ENCODE measurements at regions of chr9 and their contacts with region 1.

Region 1: DNA sequence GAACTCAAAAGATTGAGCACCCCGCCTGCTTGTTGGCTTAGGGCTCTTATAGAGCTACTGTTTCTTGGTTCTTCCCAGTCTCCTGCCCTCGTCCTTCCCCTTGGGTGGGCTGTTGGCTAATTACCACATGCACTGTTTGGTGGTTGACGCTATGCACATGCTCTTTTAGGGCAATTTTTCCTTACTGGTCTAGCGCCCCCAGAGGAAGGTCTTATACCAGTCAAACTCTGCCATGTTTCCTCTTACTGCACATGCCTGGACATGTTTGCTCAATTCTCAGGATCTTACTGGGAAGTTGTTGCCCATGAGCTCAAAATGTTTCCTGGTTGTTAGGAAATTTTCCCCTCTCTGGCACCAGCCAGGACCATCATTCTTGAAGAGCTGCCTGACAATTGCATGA is 101.9 kb downstream of the SLC28A3 start:
- DNase-seq: peak; percentile 26
- H3K4me3 Mint-ChIP-seq: no peak overlapping the region
- H3K27ac Mint-ChIP-seq: peak overlapping the region; percentile 89
- H3K4me1 Mint-ChIP-seq: no peaks in the 10 kb centered on the region
- H3K27me3 Mint-ChIP-seq: no peaks in the 10 kb centered on the region
- CTCF ChIP-seq: peak; percentile 24

Region 2: DNA sequence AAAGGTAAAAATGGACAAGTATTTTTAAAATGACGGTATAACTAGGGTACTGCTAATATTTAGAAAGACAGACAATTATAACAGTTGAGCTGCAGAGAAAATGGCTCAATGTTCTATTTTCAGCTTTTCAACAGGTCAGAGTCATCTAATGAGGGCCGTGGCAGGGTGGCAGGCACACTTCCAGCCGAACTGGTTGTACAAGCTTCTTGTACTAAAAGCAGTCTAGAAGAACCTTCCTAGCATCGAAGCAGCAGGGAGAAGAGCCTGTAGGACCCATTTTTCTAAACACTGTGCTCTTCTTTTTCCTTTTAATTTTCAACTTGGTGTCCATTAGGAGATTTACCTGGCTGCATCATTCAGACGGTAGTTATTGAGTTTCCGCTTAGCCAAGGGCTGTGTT is 16.3 kb after region 1 on chr9:
- CTCF ChIA-PET with region 1: interaction called, 13 read pairs
- POLR2A ChIA-PET with region 1: interaction called, 5 read pairs
- intact Hi-C with region 1: no loop called
- DNase-seq: no peak
- H3K4me3 Mint-ChIP-seq: no peak overlapping the region
- H3K27ac Mint-ChIP-seq: no peak overlapping the region
- H3K4me1 Mint-ChIP-seq: peaks cover 6% of the 10 kb centered on the region
- H3K27me3 Mint-ChIP-seq: no peaks in the 10 kb centered on the region
- CTCF ChIP-seq: no peak

Measured in MCF 10A (cell line).